Tibial artery (tissue), 4 donors: ENCODE measurements at regions of chr2 and their contacts with region 1.

Region 1: GRCh38 chr2:73176881-73177644 is 25.3 kb upstream of the NOTO start:
- DNase-seq: peak; percentile 93 to 94
- H3K4me3 ChIP-seq: peak overlapping the region; percentile 62 to 70
- H3K27ac ChIP-seq: peak overlapping the region; percentile 81 to 83
- H3K4me1 ChIP-seq: peaks cover 0 to 26% (median 23%) of the 10 kb centered on the region in 4 donors
- H3K27me3 ChIP-seq: peaks cover 0 to 22% of the 10 kb centered on the region in 2 donors
- CTCF ChIP-seq: peak; percentile 99

Region 2: DNA sequence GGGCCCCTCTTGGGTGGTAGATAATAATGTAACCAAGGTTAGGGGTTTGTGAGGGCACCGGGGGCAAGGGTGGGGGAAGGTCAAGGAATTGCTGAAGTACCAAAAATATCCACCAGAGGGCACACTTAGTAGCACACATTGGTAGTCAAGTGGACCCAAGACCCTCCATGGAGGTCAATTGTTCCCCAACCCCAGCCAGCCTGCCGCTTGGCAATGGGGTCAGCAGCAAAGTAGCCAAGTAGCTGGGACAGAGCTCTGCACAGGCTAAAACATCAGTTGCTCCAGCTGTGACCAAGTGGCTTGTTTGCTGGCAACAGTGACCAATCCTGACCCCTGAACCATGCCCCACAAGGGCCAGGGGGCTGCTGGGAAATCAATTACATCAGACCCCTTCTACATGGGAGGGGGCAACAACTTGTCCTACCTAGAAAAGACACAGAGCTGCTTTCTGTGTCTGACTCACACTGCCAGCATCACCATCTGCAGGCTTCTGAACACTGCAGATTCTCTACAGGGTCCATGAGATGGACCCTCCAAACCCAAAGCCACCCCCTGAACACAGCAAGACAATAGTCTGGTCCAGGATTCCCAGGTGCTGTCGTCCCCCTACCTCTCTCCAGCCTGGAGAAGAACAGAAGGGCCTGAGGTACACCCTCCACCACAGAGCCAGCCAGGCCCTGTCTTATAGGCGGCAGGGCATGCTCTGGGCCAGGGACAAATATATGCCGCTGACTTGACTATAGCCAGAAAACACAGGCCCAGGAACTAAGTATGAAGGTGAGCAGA is 183.7 kb before region 1 on chr2:
- intact Hi-C with region 1: loop called (anchors 5 kb)
- DNase-seq: peak in 1 of 2 donors; percentile 58
- H3K4me3 ChIP-seq: no peak overlapping the region
- H3K27ac ChIP-seq: no peak overlapping the region
- H3K4me1 ChIP-seq: peaks cover 0 to 10% (median 6%) of the 10 kb centered on the region in 4 donors
- H3K27me3 ChIP-seq: no peaks in the 10 kb centered on the region
- CTCF ChIP-seq: peak; percentile 75 to 85

Region 3: DNA sequence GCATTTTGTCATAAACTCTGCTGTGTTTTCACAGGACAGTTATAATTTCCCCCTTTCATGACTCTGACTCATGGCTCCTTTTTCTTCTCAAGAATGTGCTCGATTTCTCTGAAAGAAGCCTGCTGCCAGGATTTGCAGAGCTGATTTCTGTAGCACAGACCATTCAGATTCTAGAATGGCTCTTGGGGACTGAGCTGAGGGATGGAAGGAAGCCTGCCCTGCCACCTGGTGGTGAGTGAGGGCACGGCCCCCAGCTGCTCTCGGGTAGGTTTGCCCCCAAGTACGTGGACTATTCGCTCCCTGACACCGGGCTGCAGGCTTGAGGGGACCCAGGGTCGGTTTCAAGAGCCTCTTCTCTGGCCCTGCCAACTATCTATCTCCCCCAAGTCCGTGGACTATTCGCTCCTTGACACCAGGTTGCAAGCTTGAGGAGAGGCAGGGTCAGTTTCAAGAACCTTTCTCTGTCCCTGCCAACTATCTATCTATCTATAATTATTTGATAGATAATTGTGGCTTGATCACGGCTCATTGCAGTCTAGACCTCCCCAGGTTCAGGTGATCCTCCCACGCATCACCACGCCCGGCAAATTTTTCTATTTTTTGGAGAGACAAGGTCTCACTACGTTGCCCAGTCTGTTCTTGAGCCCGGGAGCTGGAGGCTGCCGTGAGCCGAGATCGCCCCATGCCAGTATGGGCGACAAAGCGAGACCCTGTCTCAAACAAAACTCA is 35.5 kb after region 1 on chr2:
- intact Hi-C with region 1: loop called (anchors 2 kb)
- DNase-seq: peak; percentile 69 to 89
- H3K4me3 ChIP-seq: no peak overlapping the region
- H3K27ac ChIP-seq: peak overlapping the region; percentile 71 to 73
- H3K4me1 ChIP-seq: peaks cover 0 to 36% (median 21%) of the 10 kb centered on the region in 4 donors
- H3K27me3 ChIP-seq: no peaks in the 10 kb centered on the region
- CTCF ChIP-seq: peak; percentile 92 to 95